K562 (cell line): ENCODE measurements at regions of chr4 and their contacts with region 1.

Region 1: GRCh38 chr4:87679449-87680169 is 29.5 kb downstream of the DMP1 start:
- DNase-seq: peak; percentile 42 to 67 (median 58)
- ATAC-seq: peak; percentile 77
- H3K4me3 ChIP-seq: no peak overlapping the region
- H3K27ac ChIP-seq: no peak overlapping the region
- H3K4me1 ChIP-seq: no peaks in the 10 kb centered on the region
- H3K27me3 ChIP-seq: no peaks in the 10 kb centered on the region; a peak in 1 of 5 replicates
- CTCF ChIP-seq: peak; percentile 79 to 86 (median 81)
- EP300 ChIP-seq: no peak
- POLR2A ChIP-seq: no peak
- RAD21 ChIP-seq: peak; percentile 72 to 80

Region 2: GRCh38 chr4:87838890-87839591 is 159.4 kb after region 1 on chr4:
- CTCF ChIA-PET with region 1: interaction called, 27 read pairs
- POLR2A ChIA-PET with region 1: interaction called, 3 read pairs
- in situ Hi-C with region 1: loop called (anchors 5 kb)
- intact Hi-C with region 1: loop called (anchors 1 kb)
- DNase-seq: peak; percentile 25 to 32 (median 29)
- ATAC-seq: peak; percentile 78
- H3K4me3 ChIP-seq: no peak overlapping the region
- H3K27ac ChIP-seq: no peak overlapping the region
- H3K4me1 ChIP-seq: no peaks in the 10 kb centered on the region
- H3K27me3 ChIP-seq: no peaks in the 10 kb centered on the region
- CTCF ChIP-seq: peak; percentile 46 to 73 (median 53); a peak in 4 of 6 replicates
- EP300 ChIP-seq: no peak
- POLR2A ChIP-seq: no peak
- RAD21 ChIP-seq: peak; percentile 58 to 64

Region 3: DNA sequence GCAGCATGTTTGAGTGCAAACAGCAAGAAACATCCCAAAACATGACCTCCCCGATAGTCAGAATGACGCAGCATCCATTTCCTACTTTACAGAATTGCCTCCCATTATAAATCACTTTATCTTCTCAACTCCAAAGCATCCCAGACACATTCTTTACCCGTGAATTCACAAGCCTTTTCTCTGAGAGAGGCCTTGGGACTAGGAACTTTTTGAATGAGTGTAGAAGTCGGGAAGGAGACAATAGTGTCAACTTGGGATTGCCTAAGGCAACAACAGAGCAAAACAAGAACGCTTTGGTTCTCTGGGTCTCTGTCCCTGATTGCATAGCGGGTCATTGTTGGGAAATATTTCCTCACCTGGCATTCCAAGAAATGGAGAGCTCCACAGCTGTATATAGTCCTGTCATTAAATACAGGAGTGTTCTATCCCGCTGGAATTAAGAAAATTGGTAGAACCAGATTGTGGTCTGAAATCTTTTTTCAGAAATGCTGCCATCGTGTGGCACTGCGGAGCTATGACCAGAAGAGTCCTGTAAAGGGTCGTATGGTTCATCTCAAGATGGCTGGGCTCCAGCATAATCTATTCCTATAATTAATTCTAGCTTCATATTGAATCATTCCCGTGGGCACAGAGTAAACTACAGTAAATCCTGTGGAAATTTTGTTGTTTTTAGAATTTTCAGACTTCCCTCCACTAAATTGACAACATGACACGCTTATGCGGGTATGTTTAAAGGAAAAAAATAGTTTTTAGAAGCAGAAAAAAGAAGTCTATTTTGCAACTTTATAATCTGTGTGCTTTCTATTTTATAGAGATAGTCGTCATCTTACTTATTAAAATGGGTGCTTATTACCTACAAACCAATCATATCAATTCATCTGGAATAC is 293.9 kb after region 1 on chr4:
- CTCF ChIA-PET with region 1: no interaction called
- POLR2A ChIA-PET with region 1: no interaction called
- in situ Hi-C with region 1: no loop called
- intact Hi-C with region 1: loop called (anchors 5 kb)
- DNase-seq: peak; percentile 30 to 47 (median 38)
- ATAC-seq: peak; percentile 89
- H3K4me3 ChIP-seq: no peak overlapping the region
- H3K27ac ChIP-seq: no peak overlapping the region
- H3K4me1 ChIP-seq: no peaks in the 10 kb centered on the region
- H3K27me3 ChIP-seq: peaks cover 4% of the 10 kb centered on the region in 2 experiments; a peak in 1 of 5 replicates
- CTCF ChIP-seq: peak; percentile 59 to 71 (median 69)
- EP300 ChIP-seq: no peak
- POLR2A ChIP-seq: no peak
- RAD21 ChIP-seq: peak; percentile 53 to 63